ENCODE measurements at regions of chr3 and their contacts with region 1.

Region 1: GRCh38 chr3:37967260-37967881 is 23.2 kb upstream of the VILL start:
- DNase-seq: peak; percentile 80
- ATAC-seq: peak; percentile 90
- H3K4me3 Mint-ChIP-seq: no peak overlapping the region
- H3K27ac Mint-ChIP-seq: no peak overlapping the region
- H3K4me1 Mint-ChIP-seq: peaks cover 3% of the 10 kb centered on the region
- H3K27me3 Mint-ChIP-seq: peaks cover 2% of the 10 kb centered on the region

Region 2: GRCh38 chr3:37862219-37862902 is 105.0 kb before region 1 on chr3:
- CTCF ChIA-PET with region 1: interaction called, 49 read pairs
- DNase-seq: no peak
- ATAC-seq: no peak
- H3K4me3 Mint-ChIP-seq: peak overlapping the region; percentile 72
- H3K27ac Mint-ChIP-seq: peak overlapping the region; percentile 16
- H3K4me1 Mint-ChIP-seq: peaks cover 32% of the 10 kb centered on the region
- H3K27me3 Mint-ChIP-seq: peaks cover 67% of the 10 kb centered on the region

Region 3: DNA sequence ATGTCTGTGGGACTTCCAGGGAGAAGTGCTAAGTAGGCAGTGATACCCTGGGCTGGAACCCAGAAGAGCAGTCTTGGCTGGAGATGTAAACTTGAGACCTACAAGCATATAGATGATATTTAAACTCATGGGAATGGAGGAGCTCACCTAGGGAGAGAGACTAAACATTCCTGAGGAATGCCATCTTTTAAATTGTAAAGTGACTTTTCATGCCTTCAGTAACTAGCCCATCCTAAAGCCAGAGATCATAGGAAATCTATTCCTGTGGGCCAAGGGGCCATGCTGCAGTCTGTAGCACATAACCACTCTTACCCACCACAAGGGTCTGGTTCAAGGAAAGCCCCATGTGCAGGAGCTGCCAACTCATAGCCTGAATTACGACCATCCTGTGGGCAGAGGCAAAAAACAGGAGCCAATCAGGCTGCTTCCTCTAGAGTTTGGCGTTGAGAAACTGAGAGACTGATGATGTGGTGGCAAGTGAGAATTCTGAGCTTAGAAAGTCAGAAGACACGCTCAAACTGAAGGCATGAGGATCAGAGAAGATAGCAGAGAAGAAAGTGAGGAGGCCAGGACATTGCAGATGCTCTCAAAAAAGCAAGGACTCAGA is 68.2 kb before region 1 on chr3:
- CTCF ChIA-PET with region 1: interaction called, 12 read pairs
- DNase-seq: peak; percentile 78
- ATAC-seq: peak; percentile 77
- H3K4me3 Mint-ChIP-seq: no peak overlapping the region
- H3K27ac Mint-ChIP-seq: peak overlapping the region; percentile 68
- H3K4me1 Mint-ChIP-seq: peaks cover 53% of the 10 kb centered on the region
- H3K27me3 Mint-ChIP-seq: peaks cover 14% of the 10 kb centered on the region

Region 4: GRCh38 chr3:37956723-37957528 is 10.4 kb before region 1 on chr3:
- CTCF ChIA-PET with region 1: interaction called, 18 read pairs
- DNase-seq: peak; percentile 23
- ATAC-seq: peak; percentile 33
- H3K4me3 Mint-ChIP-seq: no peak overlapping the region
- H3K27ac Mint-ChIP-seq: peak overlapping the region; percentile 87
- H3K4me1 Mint-ChIP-seq: peaks cover 24% of the 10 kb centered on the region
- H3K27me3 Mint-ChIP-seq: no peaks in the 10 kb centered on the region